Breast epithelium (tissue), 4 donors: ENCODE measurements at regions of chr9 and their contacts with region 1.

Region 1: GRCh38 chr9:16915126-16915831 is 44.8 kb upstream of the BNC2 start:
- DNase-seq: no peak
- H3K4me3 ChIP-seq: no peak overlapping the region
- H3K27ac ChIP-seq: no peak overlapping the region
- H3K4me1 ChIP-seq: no peaks in the 10 kb centered on the region
- H3K27me3 ChIP-seq: no peaks in the 10 kb centered on the region
- CTCF ChIP-seq: no peak
- POLR2A ChIP-seq: no peak

Region 2: GRCh38 chr9:16771356-16771755 is 143.9 kb before region 1 on chr9:
- intact Hi-C with region 1: loop called (anchors 5 kb)
- DNase-seq: no peak
- H3K4me3 ChIP-seq: no peak overlapping the region
- H3K27ac ChIP-seq: no peak overlapping the region
- H3K4me1 ChIP-seq: no peaks in the 10 kb centered on the region
- H3K27me3 ChIP-seq: no peaks in the 10 kb centered on the region
- CTCF ChIP-seq: no peak
- POLR2A ChIP-seq: no peak